ENCODE measurements at regions of chr1 and their contacts with region 1.

Region 1: GRCh38 chr1:27603681-27604578 is at the start of gene AHDC1:
- DNase-seq: peak; percentile 89 to 90
- H3K4me3 ChIP-seq: peak within 1 kb of the TSS; percentile 91
- H3K4me3 Mint-ChIP-seq: peak within 1 kb of the TSS; percentile 98
- H3K27ac Mint-ChIP-seq: peak within 1 kb of the TSS; percentile 84
- H3K4me1 ChIP-seq: peaks cover 33% of the 10 kb centered on the region
- H3K4me1 Mint-ChIP-seq: peaks cover 17% of the 10 kb centered on the region
- H3K27me3 ChIP-seq: no peaks in the 10 kb centered on the region
- H3K27me3 Mint-ChIP-seq: no peaks in the 10 kb centered on the region
- CTCF ChIP-seq: no peak
- total RNA-seq, gene AHDC1: 17.0 and 17.3 TPM in 2 replicates

Region 2: GRCh38 chr1:27392096-27392777 is 211.7 kb before region 1 on chr1 and contains the start of gene GPR3:
- CTCF ChIA-PET with region 1: interaction called, 9 read pairs
- POLR2A ChIA-PET with region 1: interaction called, 7 read pairs
- intact Hi-C with region 1: loop called (anchors 2 kb)
- DNase-seq: peak; percentile 90
- H3K4me3 ChIP-seq: peak within 1 kb of the TSS; percentile 42
- H3K4me3 Mint-ChIP-seq: peak within 1 kb of the TSS; percentile 73
- H3K27ac Mint-ChIP-seq: peak within 1 kb of the TSS; percentile 62
- H3K4me1 ChIP-seq: no peaks in the 10 kb centered on the region
- H3K4me1 Mint-ChIP-seq: peaks cover 7% of the 10 kb centered on the region
- H3K27me3 ChIP-seq: no peaks in the 10 kb centered on the region
- H3K27me3 Mint-ChIP-seq: no peaks in the 10 kb centered on the region
- CTCF ChIP-seq: peak; percentile 34 to 86
- total RNA-seq, gene GPR3: 0.91 and 1.2 TPM in 2 replicates

Region 3: GRCh38 chr1:27489910-27490741 is 113.8 kb before region 1 on chr1 and contains the start of gene WASF2:
- CTCF ChIA-PET with region 1: interaction called, 7 read pairs
- POLR2A ChIA-PET with region 1: interaction called, 3 read pairs
- intact Hi-C with region 1: loop called (anchors 10 kb)
- DNase-seq: peak; percentile 95 to 96
- H3K4me3 ChIP-seq: peak within 1 kb of the TSS; percentile 91
- H3K4me3 Mint-ChIP-seq: peak within 1 kb of the TSS; percentile 93
- H3K27ac Mint-ChIP-seq: peak within 1 kb of the TSS; percentile 100
- H3K4me1 ChIP-seq: peaks cover 11% of the 10 kb centered on the region
- H3K4me1 Mint-ChIP-seq: peaks cover 6% of the 10 kb centered on the region
- H3K27me3 ChIP-seq: no peaks in the 10 kb centered on the region
- H3K27me3 Mint-ChIP-seq: no peaks in the 10 kb centered on the region
- CTCF ChIP-seq: no peak
- total RNA-seq, gene WASF2: 59.2 and 68.6 TPM in 2 replicates

Region 4: DNA sequence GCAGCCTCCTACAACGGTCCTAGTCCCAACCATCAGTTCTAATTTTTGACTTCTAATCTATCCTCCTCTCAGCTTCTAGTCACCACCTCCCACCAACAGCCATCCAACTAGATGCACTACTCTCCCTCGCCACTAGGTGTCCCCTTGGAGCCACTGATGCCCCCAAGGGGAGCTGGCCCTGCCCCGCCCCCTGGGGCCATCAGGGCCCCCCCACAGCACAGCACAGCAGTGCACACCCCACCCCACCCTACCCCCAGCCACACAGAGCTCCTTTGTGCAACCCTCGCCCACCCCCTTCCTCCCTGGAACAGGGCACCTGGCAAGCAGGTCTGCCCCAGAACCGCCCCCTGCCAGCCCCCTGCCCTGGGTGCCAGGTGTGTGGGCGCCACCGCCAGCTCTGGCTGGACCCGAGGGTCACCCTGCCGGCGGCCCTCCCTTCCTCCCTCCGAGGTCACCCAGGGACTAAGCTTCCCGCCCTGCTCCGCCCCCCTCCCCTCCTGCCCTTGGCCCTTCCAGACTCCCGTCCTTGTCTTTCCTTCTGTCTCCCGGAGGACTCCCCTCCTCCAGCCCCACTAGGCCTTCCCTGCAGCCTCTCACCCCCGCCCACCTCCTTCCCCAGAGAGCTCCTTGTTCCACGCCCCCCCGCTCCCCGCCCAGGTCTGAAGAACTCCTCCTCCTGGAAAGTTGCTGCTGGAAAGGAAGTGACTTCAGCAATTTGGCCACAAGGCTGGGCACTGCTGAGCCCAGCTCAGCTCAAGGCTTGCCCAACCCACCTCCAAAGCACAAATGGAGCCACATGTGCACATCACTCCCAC is 46.9 kb before region 1 on chr1:
- CTCF ChIA-PET with region 1: interaction called, 45 read pairs
- POLR2A ChIA-PET with region 1: interaction called, 12 read pairs
- intact Hi-C with region 1: loop called (anchors 1 kb)
- DNase-seq: peak; percentile 76 to 91
- H3K4me3 ChIP-seq: peak overlapping the region; percentile 6; the same call in 1 of the 2 replicates
- H3K4me3 Mint-ChIP-seq: peak overlapping the region; percentile 3
- H3K27ac Mint-ChIP-seq: peak overlapping the region; percentile 53
- H3K4me1 ChIP-seq: peaks cover 16% of the 10 kb centered on the region
- H3K4me1 Mint-ChIP-seq: peaks cover 28% of the 10 kb centered on the region
- H3K27me3 ChIP-seq: no peaks in the 10 kb centered on the region
- H3K27me3 Mint-ChIP-seq: no peaks in the 10 kb centered on the region
- CTCF ChIP-seq: peak; percentile 84

Region 5: DNA sequence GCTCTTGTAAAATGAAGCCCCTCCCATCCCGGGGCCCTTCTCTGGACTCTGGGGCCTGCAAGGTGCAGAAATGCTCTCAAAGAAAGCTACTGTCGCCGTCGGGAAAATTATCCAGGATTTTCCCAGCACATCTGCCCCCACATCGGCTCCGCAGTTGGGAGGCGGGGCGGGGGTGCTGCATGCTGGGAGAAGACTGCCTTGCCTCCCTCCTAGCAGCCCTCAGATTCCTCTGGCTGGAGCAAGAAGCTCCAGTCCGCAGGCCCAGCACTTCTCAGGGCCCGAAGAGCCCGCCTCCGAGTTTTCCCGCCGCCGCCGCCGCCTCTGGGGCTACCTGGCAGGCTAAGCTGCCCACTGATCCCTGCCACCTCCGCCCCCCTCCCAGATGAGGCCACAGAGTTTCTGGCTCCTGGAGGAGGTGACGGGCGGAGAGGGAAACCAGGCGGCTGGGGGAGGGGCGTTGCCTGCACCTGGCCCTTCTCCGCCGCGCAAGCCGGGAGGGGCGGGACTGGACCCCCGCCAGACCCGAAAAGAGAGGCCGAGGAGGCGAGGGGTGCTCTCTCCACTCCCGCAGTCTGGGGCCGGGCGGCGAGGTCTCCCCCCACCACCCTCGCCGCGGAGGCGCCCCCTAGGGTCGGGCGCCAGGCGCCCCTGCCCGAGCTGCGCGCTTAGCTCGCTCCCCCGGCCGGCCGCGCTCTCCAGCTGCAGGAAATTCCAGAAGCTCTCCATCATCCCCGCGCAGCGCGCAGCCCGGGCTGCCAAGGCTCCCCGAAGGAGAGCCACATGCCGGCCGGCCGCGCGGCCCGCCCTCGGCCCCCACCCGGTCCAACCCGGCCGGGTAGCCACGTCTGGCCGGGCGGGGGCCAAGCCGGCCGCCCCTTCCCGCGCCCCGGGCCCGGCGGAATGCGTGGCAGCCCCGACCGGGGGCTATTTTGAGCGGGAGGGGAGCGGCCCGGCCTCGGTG is 28.8 kb before region 1 on chr1:
- CTCF ChIA-PET with region 1: interaction called, 19 read pairs
- POLR2A ChIA-PET with region 1: interaction called, 6 read pairs
- intact Hi-C with region 1: no loop called
- DNase-seq: peak; percentile 86 to 87
- H3K4me3 ChIP-seq: peak overlapping the region; percentile 53
- H3K4me3 Mint-ChIP-seq: peak overlapping the region; percentile 67
- H3K27ac Mint-ChIP-seq: peak overlapping the region; percentile 92
- H3K4me1 ChIP-seq: peaks cover 52% of the 10 kb centered on the region
- H3K4me1 Mint-ChIP-seq: peaks cover 38% of the 10 kb centered on the region
- H3K27me3 ChIP-seq: no peaks in the 10 kb centered on the region
- H3K27me3 Mint-ChIP-seq: no peaks in the 10 kb centered on the region
- CTCF ChIP-seq: peak; percentile 25 to 37

Region 6: DNA sequence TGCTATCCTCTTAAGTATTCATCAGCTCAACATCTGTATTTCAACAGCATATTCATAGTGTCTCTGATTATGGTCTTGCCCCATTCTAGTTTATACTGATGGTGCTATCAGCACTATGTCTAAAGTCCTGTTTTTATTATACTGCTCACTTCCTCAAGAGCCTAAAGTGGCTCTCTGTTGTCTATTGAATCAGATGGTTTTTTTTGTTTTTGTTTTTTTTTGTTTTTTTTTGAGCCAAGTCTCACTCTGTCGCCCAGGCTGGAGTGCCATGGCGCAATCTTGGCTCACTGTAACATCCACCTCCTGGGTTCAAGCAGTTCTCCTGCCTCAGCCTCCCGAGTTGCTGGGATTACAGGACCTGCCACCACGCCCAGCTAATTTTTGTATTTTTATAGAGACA is 175.2 kb after region 1 on chr1:
- CTCF ChIA-PET with region 1: no interaction called
- POLR2A ChIA-PET with region 1: no interaction called
- intact Hi-C with region 1: no loop called
- DNase-seq: no peak
- H3K4me3 ChIP-seq: no peak overlapping the region
- H3K4me3 Mint-ChIP-seq: no peak overlapping the region
- H3K27ac Mint-ChIP-seq: no peak overlapping the region
- H3K4me1 ChIP-seq: peaks cover under 1% of the 10 kb centered on the region
- H3K4me1 Mint-ChIP-seq: no peaks in the 10 kb centered on the region
- H3K27me3 ChIP-seq: no peaks in the 10 kb centered on the region
- H3K27me3 Mint-ChIP-seq: no peaks in the 10 kb centered on the region
- CTCF ChIP-seq: no peak